H1 (cell line): ENCODE measurements at regions of chr3 and their contacts with region 1.

Region 1: GRCh38 chr3:32856355-32856889 is 38.6 kb downstream of the TRIM71 start:
- DNase-seq: no peak
- H3K4me3 ChIP-seq: no peak overlapping the region
- H3K27ac ChIP-seq: no peak overlapping the region
- H3K4me1 ChIP-seq: peaks cover 32 to 63% (median 43%) of the 10 kb centered on the region in 4 experiments
- H3K27me3 ChIP-seq: no peaks in the 10 kb centered on the region; a peak in 1 of 7 replicates
- CTCF ChIP-seq: no peak
- EP300 ChIP-seq: no peak
- POLR2A ChIP-seq: no peak
- RAD21 ChIP-seq: no peak

Region 2: DNA sequence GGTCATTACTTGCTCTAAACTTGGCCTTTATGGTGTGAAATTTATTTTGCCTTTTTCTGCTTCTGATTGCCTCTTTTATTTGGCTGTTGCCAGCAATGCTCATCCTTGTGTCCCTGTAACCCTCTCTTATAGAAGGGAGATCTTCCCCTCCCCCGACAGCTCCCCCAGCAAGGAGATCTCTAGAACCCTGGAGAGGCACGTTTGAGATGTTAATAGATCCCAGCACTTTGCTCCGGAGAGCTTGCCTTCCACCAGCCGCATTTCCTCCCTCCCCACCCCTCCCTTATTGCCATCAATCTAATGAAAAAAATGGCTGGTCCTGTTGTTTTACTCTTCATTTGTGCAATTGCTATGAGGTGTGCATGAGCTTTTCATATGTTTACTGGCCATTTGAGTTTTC is 20.5 kb before region 1 on chr3:
- CTCF ChIA-PET with region 1: interaction called, 3 read pairs
- POLR2A ChIA-PET with region 1: interaction called, 104 read pairs
- DNase-seq: peak in 1 of 2 experiments; percentile 73
- H3K4me3 ChIP-seq: peak overlapping the region; percentile 17 to 57 (median 37); a peak in 6 of 8 replicates
- H3K27ac ChIP-seq: no peak overlapping the region
- H3K4me1 ChIP-seq: peaks cover 26 to 55% (median 37%) of the 10 kb centered on the region in 4 experiments
- H3K27me3 ChIP-seq: no peaks in the 10 kb centered on the region
- CTCF ChIP-seq: no peak
- EP300 ChIP-seq: peak in 1 of 2 experiments; percentile 62; a peak in 1 of 3 replicates
- POLR2A ChIP-seq: peak in 1 of 2 experiments; percentile 67; a peak in 2 of 3 replicates
- RAD21 ChIP-seq: peak in 1 of 2 experiments; percentile 10; a peak in 1 of 4 replicates

Region 3: GRCh38 chr3:32842531-32842931 is 13.9 kb before region 1 on chr3:
- CTCF ChIA-PET with region 1: interaction called, 12 read pairs
- POLR2A ChIA-PET with region 1: interaction called, 104 read pairs
- DNase-seq: no peak
- H3K4me3 ChIP-seq: peak overlapping the region in 3 of 4 experiments; percentile 12 to 57 (median 35); a peak in 5 of 8 replicates
- H3K27ac ChIP-seq: peak overlapping the region; percentile 51; the same call in 1 of the 2 replicates
- H3K4me1 ChIP-seq: peaks cover 43 to 68% (median 61%) of the 10 kb centered on the region in 4 experiments
- H3K27me3 ChIP-seq: no peaks in the 10 kb centered on the region
- CTCF ChIP-seq: no peak
- EP300 ChIP-seq: no peak
- POLR2A ChIP-seq: peak in 1 of 2 experiments; percentile 60; a peak in 2 of 3 replicates
- RAD21 ChIP-seq: no peak

Region 4: DNA sequence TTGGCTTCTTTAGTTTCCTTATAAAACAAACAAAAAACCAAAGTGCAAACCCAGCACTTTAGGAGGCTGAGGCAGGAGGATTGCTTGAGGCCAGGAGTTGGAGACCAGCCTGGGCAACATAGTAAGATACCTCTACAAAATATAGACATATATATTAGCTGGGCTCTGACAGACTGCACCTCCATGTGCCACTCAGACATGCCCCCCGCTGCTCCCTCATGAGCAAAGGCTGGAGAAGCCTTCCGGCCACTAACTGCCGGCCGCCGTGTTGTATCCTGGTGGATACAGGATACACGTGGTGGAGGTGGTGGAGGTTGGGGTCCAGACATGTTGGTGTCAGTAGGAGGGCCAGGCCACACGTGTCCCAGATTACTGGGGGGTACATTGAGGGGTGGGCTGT is 65.7 kb after region 1 on chr3:
- CTCF ChIA-PET with region 1: no interaction called
- POLR2A ChIA-PET with region 1: no interaction called
- DNase-seq: no peak
- H3K4me3 ChIP-seq: no peak overlapping the region
- H3K27ac ChIP-seq: no peak overlapping the region
- H3K4me1 ChIP-seq: no peaks in the 10 kb centered on the region
- H3K27me3 ChIP-seq: no peaks in the 10 kb centered on the region
- CTCF ChIP-seq: no peak
- EP300 ChIP-seq: no peak
- POLR2A ChIP-seq: no peak
- RAD21 ChIP-seq: no peak